ENCODE measurements at regions of chr1 and their contacts with region 1.

Region 1: GRCh38 chr1:32933742-32934322 is 30.8 kb downstream of the RNF19B start:
- DNase-seq: no peak
- CTCF ChIP-seq: no peak

Region 2: DNA sequence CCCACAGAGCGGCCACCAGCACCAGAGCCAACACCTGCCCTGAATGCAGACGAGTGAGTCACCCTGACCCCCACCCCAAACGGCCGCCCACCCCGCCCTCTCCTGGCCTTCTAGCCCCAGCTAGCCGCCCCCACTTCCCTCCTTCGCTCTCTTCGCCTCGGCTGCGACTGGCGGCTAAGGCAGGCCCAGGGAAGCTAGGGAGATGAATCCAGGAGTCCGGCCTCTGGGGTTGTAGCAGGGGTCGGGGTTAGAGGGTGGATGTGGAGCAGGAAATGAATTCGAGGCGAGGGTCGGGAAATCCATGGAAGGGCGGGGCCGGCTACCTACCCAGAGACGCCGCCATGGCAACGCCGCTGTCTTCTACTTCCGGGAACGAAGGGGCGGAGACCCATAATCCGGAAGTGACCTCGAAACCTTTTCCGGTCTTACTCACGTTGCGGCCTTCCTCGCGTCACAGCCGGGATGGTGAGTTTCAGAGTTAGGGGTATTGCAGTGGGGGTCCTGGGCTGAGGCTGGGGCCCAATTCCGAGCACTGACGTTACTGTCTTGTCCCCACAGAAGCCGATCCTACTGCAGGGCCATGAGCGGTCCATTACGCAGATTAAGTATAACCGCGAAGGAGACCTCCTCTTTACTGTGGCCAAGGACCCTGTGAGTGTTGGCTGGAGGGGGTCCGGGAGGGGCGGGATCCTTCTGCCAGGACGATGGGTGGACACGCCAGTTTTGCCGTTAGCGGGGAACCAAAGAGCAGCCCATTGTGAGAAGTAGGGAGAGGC is 711.7 kb before region 1 on chr1 and contains the starts of genes EIF3I and TMEM234:
- CTCF ChIA-PET with region 1: no interaction called
- POLR2A ChIA-PET with region 1: no interaction called
- DNase-seq: peak; percentile 96
- CTCF ChIP-seq: no peak

Region 3: DNA sequence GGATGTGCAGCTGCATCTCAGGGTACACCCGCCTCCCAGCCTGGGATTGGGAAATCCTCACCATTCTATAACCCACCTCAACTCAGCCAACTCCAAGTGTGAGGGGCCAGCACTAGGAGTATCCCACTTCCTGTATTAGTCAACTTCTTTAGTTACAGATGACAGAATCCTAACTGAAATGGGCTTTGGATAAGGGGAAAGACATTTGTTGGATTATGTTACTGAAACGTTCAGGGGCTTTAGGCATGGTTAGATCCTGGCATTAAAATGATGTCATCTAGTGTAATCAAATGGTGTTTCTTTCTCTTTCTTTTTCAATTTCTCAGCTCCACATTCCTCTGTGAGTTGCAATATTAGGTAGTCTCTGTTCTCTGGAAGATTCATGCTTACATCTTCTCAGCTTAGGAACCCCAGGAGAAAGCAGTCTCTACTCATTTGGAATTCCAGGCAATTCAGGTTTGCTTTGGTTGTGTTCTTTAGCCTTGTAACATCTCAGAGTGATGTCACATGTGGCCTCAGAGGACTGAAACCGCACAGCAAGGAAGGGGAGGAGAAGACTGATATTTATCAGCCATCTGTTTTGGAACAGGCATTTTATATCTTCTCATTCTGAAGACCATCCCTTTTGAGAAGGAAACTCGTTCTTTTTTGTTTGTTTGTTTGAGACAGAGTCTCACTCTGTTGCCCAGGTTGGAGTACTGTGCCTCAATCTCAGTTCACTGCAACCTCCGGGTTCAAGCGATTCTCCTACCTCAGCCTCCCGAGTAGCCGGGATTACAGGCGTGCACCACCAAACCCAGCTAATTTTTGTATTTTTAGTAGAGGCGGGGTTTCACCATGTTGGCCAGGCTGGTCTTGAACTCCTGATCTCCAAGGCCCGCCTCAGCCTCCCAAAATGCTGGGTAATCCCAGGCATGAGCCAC is 13.8 kb before region 1 on chr1:
- CTCF ChIA-PET with region 1: interaction called, 24 read pairs
- POLR2A ChIA-PET with region 1: no interaction called
- DNase-seq: no peak
- CTCF ChIP-seq: no peak

Region 4: GRCh38 chr1:33007190-33008050 is 73.6 kb after region 1 on chr1:
- CTCF ChIA-PET with region 1: interaction called, 14 read pairs
- POLR2A ChIA-PET with region 1: no interaction called
- DNase-seq: no peak
- CTCF ChIP-seq: no peak

Region 5: DNA sequence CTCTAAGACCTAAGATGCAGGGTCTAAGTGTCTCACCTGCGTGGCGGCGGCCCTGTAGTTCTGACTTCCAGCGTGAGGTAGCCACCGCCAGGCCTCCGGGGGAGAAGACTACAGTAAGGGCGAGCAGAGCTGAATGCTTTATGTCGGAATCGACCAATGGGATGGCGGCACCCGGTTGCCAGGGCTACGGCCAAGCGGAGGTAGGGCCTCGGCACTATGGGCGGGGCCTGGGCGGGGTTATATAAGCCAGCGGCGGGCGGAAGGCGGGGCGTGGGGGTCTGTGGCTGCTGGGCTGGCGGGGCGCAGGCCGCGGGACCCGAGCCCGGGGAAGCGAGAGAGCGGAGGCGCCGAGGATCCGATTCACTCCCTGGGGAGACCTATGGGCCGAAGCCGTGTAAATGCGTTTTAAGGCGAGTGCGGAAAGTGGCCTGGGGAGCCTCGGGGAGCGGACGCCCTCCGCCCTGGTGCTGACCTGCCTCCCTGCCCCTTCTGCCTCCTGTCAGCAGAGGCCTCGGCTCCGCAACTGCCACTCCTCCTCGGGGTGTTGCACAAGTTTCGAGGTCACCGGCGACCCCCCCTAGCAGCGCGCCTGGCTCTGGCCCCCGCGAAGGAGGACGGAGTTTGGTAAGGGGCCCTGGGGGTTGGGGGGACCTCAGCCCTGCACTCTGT is 147.2 kb after region 1 on chr1 and contains the start of gene AZIN2:
- CTCF ChIA-PET with region 1: interaction called, 41 read pairs
- POLR2A ChIA-PET with region 1: no interaction called
- DNase-seq: peak; percentile 96
- CTCF ChIP-seq: no peak

Region 6: GRCh38 chr1:33094971-33095604 is 161.3 kb after region 1 on chr1:
- CTCF ChIA-PET with region 1: interaction called, 13 read pairs
- POLR2A ChIA-PET with region 1: no interaction called
- DNase-seq: peak; percentile 29
- CTCF ChIP-seq: peak; percentile 83

Measured in GM10248 (cell line).